ENCODE measurements at regions of chr9 and their contacts with region 1.

Region 1: GRCh38 chr9:84315278-84315877 is 25.2 kb downstream of the SLC28A3 start:
- DNase-seq: peak in 1 of 2 donors; percentile 19
- ATAC-seq: peak in 1 of 2 donors; percentile 53
- H3K4me3 ChIP-seq: no peak overlapping the region
- H3K27ac ChIP-seq: no peak overlapping the region
- H3K4me1 ChIP-seq: peaks cover 0 to 3% of the 10 kb centered on the region in 2 donors
- H3K27me3 ChIP-seq: peaks cover 0 to 4% (median 0%) of the 10 kb centered on the region in 3 donors
- CTCF ChIP-seq: peak; percentile 40 to 77 (median 59)
- POLR2A ChIP-seq: no peak

Region 2: GRCh38 chr9:84261082-84261746 is 54.2 kb before region 1 on chr9:
- in situ Hi-C with region 1: no loop called
- intact Hi-C with region 1: loop called (anchors 1 kb)
- DNase-seq: peak; percentile 59 to 70
- ATAC-seq: peak; percentile 92 to 97
- H3K4me3 ChIP-seq: peak overlapping the region; percentile 11 to 45 (median 26)
- H3K27ac ChIP-seq: no peak overlapping the region
- H3K4me1 ChIP-seq: no peaks in the 10 kb centered on the region
- H3K27me3 ChIP-seq: no peaks in the 10 kb centered on the region
- CTCF ChIP-seq: peak; percentile 83 to 95 (median 86)
- POLR2A ChIP-seq: no peak